Prostate gland (tissue), 2 donors: ENCODE measurements at regions of chr1 and their contacts with region 1.

Region 1: DNA sequence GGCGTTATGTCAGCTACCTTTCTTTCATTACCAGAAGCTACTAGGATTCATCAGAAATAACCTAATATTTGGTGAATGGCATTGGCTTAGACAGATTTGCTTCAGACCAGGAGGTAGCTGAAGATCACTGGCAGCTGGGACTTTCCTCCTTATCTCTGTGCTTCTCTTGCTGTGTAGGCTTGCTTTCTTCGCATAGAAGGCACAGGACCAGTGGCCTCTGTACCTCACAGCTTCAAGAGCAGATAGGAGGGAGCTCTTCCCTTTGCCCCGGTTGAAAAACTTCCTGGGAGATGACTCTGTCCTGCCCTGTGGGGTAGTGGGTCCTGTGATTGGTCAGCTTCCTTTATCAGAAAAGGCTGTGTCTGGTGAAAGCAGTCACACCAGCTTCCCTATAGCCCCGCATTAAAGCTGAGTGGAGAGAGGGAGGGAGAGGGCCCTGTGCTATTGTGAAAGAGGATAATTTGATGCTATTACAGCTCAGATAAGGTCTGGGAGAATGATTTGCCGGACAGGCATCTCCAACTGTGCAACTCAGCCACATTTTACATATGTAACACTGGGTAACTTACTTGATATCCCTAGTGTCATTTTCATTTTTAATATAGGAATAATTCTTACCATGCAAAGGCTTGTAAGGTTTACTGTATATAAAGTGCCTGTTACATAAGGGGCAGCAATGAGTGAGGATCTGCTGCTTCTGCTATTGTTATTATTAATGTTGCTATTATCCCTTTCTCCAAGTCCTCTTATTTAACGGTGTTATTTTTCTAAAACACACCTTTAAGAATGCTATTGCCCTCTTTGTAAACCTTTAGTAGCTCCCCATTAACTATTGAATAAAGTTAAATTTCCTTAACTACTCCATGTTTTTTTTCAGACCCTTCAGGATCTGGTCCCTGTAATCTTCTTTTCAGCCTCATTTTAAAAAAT is 31.6 kb downstream of the OSBPL9 start:
- DNase-seq: no peak
- H3K4me3 ChIP-seq: no peak overlapping the region
- H3K27ac ChIP-seq: peak overlapping the region in 1 of 2 donors; percentile 25
- H3K4me1 ChIP-seq: no peaks in the 10 kb centered on the region
- H3K27me3 ChIP-seq: no peaks in the 10 kb centered on the region
- CTCF ChIP-seq: no peak
- POLR2A ChIP-seq: no peak

Region 2: DNA sequence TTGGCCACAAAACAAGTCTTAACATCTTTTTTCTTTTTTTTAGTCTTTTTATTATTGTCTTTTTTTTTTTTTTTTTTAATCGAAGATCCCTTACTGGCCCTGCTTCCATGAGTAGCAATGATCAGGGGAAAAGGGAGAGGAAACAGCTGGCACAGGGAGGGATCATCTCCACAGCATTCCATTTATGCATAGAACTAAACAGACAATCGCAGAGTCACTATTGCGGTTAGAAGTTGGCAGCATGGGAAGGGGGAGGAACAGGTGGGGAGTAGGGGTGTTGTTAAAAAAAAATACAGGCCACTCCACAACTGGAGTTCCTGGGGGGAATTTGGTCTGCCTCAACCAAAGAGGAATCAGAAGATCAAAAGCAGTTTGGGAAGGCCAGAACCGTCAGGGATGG is 491.1 kb before region 1 on chr1:
- intact Hi-C with region 1: no loop called
- DNase-seq: no peak
- H3K4me3 ChIP-seq: no peak overlapping the region
- H3K27ac ChIP-seq: no peak overlapping the region
- H3K4me1 ChIP-seq: no peaks in the 10 kb centered on the region
- H3K27me3 ChIP-seq: no peaks in the 10 kb centered on the region
- CTCF ChIP-seq: no peak
- POLR2A ChIP-seq: no peak

Region 3: GRCh38 chr1:51729824-51730301 is 81.4 kb after region 1 on chr1:
- intact Hi-C with region 1: loop called (anchors 10 kb)
- DNase-seq: no peak
- H3K4me3 ChIP-seq: peak overlapping the region; percentile 43 to 65
- H3K27ac ChIP-seq: peak overlapping the region; percentile 73 to 74
- H3K4me1 ChIP-seq: peaks cover 14% of the 10 kb centered on the region
- H3K27me3 ChIP-seq: no peaks in the 10 kb centered on the region
- CTCF ChIP-seq: no peak
- POLR2A ChIP-seq: no peak

Region 4: GRCh38 chr1:51814513-51814912 is 166.1 kb after region 1 on chr1:
- intact Hi-C with region 1: no loop called
- DNase-seq: no peak
- H3K4me3 ChIP-seq: no peak overlapping the region
- H3K27ac ChIP-seq: no peak overlapping the region
- H3K4me1 ChIP-seq: no peaks in the 10 kb centered on the region
- H3K27me3 ChIP-seq: no peaks in the 10 kb centered on the region
- CTCF ChIP-seq: no peak
- POLR2A ChIP-seq: no peak